CD8-positive, alpha-beta memory T cell (primary cell): ENCODE measurements at regions of chr5 and their contacts with region 1.

Region 1: DNA sequence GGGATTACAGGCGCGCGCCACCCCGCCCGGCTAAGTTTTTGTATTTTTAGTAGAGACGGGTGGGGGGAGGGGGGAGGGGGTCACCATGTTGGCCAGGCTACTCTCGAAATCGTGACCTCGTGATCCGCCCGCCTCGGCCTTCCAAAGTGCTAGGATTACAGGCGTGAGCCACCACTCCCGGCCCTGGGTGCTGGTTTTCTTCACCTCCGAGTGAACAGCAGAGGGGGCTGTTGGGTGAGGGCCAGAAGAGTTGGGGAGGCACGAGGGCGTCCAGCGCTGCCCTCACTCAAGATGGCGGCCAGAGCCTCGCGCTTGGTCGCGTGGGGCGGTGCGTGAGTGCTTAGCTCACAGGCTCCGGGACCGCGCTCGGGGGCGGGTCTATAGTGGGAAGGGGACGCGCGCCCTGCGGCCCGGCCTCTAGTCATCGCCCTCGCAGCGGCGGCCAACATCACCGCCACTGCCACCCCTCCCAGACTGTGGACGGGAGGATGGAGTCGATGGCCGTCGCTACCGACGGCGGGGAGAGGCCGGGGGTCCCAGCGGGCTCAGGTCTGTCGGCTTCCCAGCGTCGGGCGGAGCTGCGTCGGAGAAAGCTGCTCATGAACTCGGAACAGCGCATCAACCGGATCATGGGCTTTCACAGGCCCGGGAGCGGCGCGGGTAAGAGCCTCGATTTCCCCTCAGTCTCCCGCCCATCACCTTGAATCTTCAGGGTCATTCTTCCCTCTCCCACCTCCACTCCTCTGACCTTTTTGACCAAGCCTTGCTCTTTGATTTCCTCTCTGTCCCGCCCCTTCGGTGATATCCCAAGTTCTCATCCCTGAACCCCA is at the start of gene CAMLG:
- DNase-seq: peak; percentile 95 to 98 (median 96)
- H3K4me3 ChIP-seq: peak within 1 kb of the TSS; percentile 84
- H3K4me3 Mint-ChIP-seq: peak within 1 kb of the TSS; percentile 91 to 97 (median 95)
- H3K27ac ChIP-seq: peak within 1 kb of the TSS; percentile 86
- H3K27ac Mint-ChIP-seq: peak within 1 kb of the TSS; percentile 90 to 98 (median 95)
- H3K4me1 ChIP-seq: peaks cover 19% of the 10 kb centered on the region
- H3K4me1 Mint-ChIP-seq: peaks cover 23 to 42% (median 40%) of the 10 kb centered on the region in 3 donors
- H3K27me3 ChIP-seq: no peaks in the 10 kb centered on the region
- H3K27me3 Mint-ChIP-seq: no peaks in the 10 kb centered on the region
- total RNA-seq, gene CAMLG: 23.1 to 23.6 TPM

Region 2: DNA sequence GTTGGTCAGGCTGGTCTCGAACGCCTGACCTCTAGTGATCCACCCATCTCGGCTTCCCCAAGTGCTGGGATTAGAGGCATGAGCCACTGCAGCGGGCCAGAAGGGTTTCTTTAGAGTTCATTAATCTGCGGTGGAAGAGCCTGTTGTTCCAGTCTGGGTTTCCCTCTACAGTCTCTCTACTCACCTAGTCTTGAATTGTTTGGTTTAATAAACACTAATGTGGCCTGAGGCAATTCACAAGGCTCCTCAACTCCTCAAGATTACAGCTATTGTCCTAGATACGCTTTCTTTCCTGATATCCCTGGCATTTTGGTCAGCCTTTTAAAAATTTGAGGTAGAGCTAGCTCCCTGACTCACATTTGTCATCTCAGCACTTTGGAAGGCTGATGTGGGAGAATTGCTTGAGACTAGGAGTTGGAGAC is 101.2 kb before region 1 on chr5:
- CTCF ChIA-PET with region 1: no interaction called
- POLR2A ChIA-PET with region 1: no interaction called
- DNase-seq: no peak
- H3K4me3 ChIP-seq: no peak overlapping the region
- H3K4me3 Mint-ChIP-seq: no peak overlapping the region
- H3K27ac ChIP-seq: no peak overlapping the region
- H3K27ac Mint-ChIP-seq: peak overlapping the region in 1 of 8 donors; percentile 68
- H3K4me1 ChIP-seq: no peaks in the 10 kb centered on the region
- H3K4me1 Mint-ChIP-seq: peaks cover 5 to 8% (median 6%) of the 10 kb centered on the region in 3 donors
- H3K27me3 ChIP-seq: no peaks in the 10 kb centered on the region
- H3K27me3 Mint-ChIP-seq: peaks cover 0 to 2% of the 10 kb centered on the region in 2 donors

Region 3: GRCh38 chr5:134648425-134649162 is 89.8 kb before region 1 on chr5 and contains the start of gene SEC24A:
- CTCF ChIA-PET with region 1: interaction called, 3 read pairs
- POLR2A ChIA-PET with region 1: interaction called, 10 read pairs
- DNase-seq: peak; percentile 88 to 93 (median 90)
- H3K4me3 ChIP-seq: peak within 1 kb of the TSS; percentile 71
- H3K4me3 Mint-ChIP-seq: peak within 1 kb of the TSS; percentile 89 to 98 (median 95)
- H3K27ac ChIP-seq: peak within 1 kb of the TSS; percentile 93
- H3K27ac Mint-ChIP-seq: peak within 1 kb of the TSS; percentile 96 to 100 (median 98)
- H3K4me1 ChIP-seq: peaks cover 10% of the 10 kb centered on the region
- H3K4me1 Mint-ChIP-seq: peaks cover 22 to 38% (median 37%) of the 10 kb centered on the region in 3 donors
- H3K27me3 ChIP-seq: no peaks in the 10 kb centered on the region
- H3K27me3 Mint-ChIP-seq: no peaks in the 10 kb centered on the region
- total RNA-seq, gene SEC24A: 18.8 to 21.2 TPM

Region 4: GRCh38 chr5:134758504-134759341 is 20.4 kb after region 1 on chr5 and contains the start of gene DDX46:
- CTCF ChIA-PET with region 1: interaction called, 44 read pairs
- POLR2A ChIA-PET with region 1: interaction called, 22 read pairs
- DNase-seq: peak; percentile 89 to 94 (median 90)
- H3K4me3 ChIP-seq: peak within 1 kb of the TSS; percentile 96
- H3K4me3 Mint-ChIP-seq: peak within 1 kb of the TSS; percentile 96 to 100 (median 100)
- H3K27ac ChIP-seq: peak within 1 kb of the TSS; percentile 78
- H3K27ac Mint-ChIP-seq: peak within 1 kb of the TSS; percentile 83 to 100 (median 98)
- H3K4me1 ChIP-seq: peaks cover 21% of the 10 kb centered on the region
- H3K4me1 Mint-ChIP-seq: peaks cover 36 to 46% (median 44%) of the 10 kb centered on the region in 3 donors
- H3K27me3 ChIP-seq: no peaks in the 10 kb centered on the region
- H3K27me3 Mint-ChIP-seq: no peaks in the 10 kb centered on the region
- total RNA-seq, gene DDX46: 81.3 to 83.8 TPM

Region 5: GRCh38 chr5:134845852-134846640 is 107.7 kb after region 1 on chr5 and contains the start of gene C5orf24:
- CTCF ChIA-PET with region 1: interaction called, 3 read pairs
- POLR2A ChIA-PET with region 1: interaction called, 12 read pairs
- DNase-seq: peak; percentile 84 to 94 (median 90)
- H3K4me3 ChIP-seq: peak within 1 kb of the TSS; percentile 70
- H3K4me3 Mint-ChIP-seq: peak within 1 kb of the TSS; percentile 84 to 96 (median 88)
- H3K27ac ChIP-seq: peak within 1 kb of the TSS; percentile 92
- H3K27ac Mint-ChIP-seq: peak within 1 kb of the TSS; percentile 92 to 98 (median 96)
- H3K4me1 ChIP-seq: peaks cover 25% of the 10 kb centered on the region
- H3K4me1 Mint-ChIP-seq: peaks cover 30 to 40% (median 39%) of the 10 kb centered on the region in 3 donors
- H3K27me3 ChIP-seq: no peaks in the 10 kb centered on the region
- H3K27me3 Mint-ChIP-seq: no peaks in the 10 kb centered on the region
- total RNA-seq, gene C5orf24: 28.9 to 29.8 TPM